ENCODE measurements at regions of chr18 and their contacts with region 1.

Region 1: DNA sequence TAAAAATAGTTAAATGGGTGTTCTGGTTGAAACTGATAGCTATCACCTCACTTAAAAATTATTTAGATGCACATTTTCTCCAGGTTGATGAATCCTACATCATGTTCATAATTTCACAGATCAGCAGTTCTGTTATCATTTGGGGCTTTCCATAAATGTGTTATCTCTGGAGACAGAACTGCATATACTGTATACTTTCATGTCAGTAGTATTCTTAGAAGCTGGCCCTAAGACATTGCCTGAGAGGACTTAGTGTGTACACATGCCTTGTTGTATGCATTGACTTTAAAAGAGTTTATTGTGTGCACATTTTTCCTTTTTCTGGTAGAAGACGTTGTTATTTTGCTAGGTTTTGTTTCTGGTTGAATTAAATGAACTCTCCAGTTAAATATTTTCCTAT is 41.0 kb downstream of the PIK3C3 start:
- DNase-seq: no peak
- H3K4me3 ChIP-seq: no peak overlapping the region
- H3K27ac ChIP-seq: no peak overlapping the region
- H3K4me1 ChIP-seq: no peaks in the 10 kb centered on the region
- H3K27me3 ChIP-seq: no peaks in the 10 kb centered on the region
- CTCF ChIP-seq: no peak
- EP300 ChIP-seq: no peak
- POLR2A ChIP-seq: no peak

Region 2: DNA sequence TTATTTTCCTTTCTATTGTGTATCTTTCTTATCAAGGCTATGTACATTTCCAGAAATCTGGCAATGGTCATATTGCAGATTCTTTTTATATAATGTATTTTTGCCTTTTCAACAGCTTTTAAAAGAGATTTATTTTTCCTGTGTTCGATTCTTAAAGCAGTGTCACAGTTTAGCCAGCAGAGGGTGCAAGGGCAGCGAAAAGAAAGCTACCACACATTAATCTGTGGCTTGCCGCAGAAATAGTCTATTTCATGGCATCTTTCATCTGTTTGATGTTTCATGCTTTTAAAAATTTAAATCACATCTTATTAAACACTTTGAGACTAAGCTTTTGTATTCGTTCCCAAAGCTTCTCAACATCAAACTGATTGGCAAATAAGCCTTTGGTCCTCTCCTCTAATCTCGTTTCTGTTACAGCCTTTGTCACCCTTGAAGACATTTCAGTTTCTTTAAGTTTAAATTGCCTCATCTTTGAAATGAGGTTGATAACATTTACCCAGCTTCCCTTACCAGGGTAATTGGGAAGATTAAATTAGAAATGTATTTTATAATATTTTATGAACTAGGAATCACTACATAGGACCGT is 32.3 kb after region 1 on chr18:
- intact Hi-C with region 1: loop called in 1 of 4 experiments (anchors 1 kb)
- DNase-seq: no peak
- H3K4me3 ChIP-seq: no peak overlapping the region
- H3K27ac ChIP-seq: no peak overlapping the region
- H3K4me1 ChIP-seq: no peaks in the 10 kb centered on the region
- H3K27me3 ChIP-seq: no peaks in the 10 kb centered on the region
- CTCF ChIP-seq: peak in 1 of 3 donors; percentile 44
- EP300 ChIP-seq: no peak
- POLR2A ChIP-seq: no peak